Dendritic cell treated with granulocyte-macrophage colony-stimulating factor and Interleukin-4, amounts not matched to agents 40 ng/mL and 50 ng/mL, for 4 days (primary cell): ENCODE measurements at regions of chr13 and their contacts with region 1.

Region 1: GRCh38 chr13:39612023-39612637 is 9.1 kb upstream of the LHFPL6 start:
- H3K4me3 Mint-ChIP-seq: no peak overlapping the region
- H3K27ac Mint-ChIP-seq: no peak overlapping the region
- H3K4me1 Mint-ChIP-seq: no peaks in the 10 kb centered on the region
- H3K27me3 Mint-ChIP-seq: peaks cover 3% of the 10 kb centered on the region

Region 2: GRCh38 chr13:39051157-39051556 is 561.0 kb before region 1 on chr13:
- intact Hi-C with region 1: loop called (anchors 5 kb)
- H3K4me3 Mint-ChIP-seq: no peak overlapping the region
- H3K27ac Mint-ChIP-seq: no peak overlapping the region
- H3K4me1 Mint-ChIP-seq: peaks cover 12% of the 10 kb centered on the region
- H3K27me3 Mint-ChIP-seq: no peaks in the 10 kb centered on the region

Region 3: GRCh38 chr13:39144941-39145533 is 467.1 kb before region 1 on chr13:
- intact Hi-C with region 1: loop called (anchors 2 kb)
- H3K4me3 Mint-ChIP-seq: no peak overlapping the region
- H3K27ac Mint-ChIP-seq: no peak overlapping the region
- H3K4me1 Mint-ChIP-seq: no peaks in the 10 kb centered on the region
- H3K27me3 Mint-ChIP-seq: no peaks in the 10 kb centered on the region

Region 4: DNA sequence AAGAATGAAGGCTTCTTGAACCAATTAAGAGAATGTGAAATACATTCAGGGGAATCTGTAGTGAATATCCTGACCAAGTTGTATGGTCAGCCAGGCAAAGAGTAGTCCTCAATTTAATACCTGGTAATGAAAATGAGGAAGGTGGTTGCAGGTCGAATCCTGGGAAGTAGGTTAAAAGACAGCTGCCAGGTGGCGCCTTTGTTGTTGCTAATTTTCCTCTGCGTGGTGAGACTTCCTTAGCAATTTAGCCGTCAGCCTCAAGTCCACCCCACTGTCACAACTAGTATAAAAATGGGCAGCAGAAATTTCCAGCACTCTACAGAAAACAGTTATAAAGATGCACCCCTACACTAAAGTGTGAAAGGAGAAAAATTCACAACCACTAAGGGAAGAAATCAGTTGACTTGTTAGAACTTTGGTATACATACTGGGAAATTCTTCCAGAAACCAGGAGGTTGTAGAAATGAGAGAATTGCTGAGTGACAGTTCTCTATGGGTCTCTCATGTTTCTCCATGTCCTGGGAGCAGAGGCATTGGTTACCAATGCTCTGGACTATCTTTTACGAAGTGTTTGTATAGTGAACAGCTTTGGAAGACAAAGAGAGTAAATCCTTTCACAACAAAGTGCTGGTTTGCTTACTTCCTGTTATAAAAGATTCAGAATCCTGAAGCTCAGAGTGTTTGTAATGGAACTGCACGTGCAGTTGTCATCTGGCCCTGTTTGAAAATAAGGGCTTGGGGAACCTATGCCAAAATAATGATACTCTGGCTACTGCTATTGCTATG is 338.0 kb before region 1 on chr13:
- intact Hi-C with region 1: loop called (anchors 2 kb)
- H3K4me3 Mint-ChIP-seq: no peak overlapping the region
- H3K27ac Mint-ChIP-seq: no peak overlapping the region
- H3K4me1 Mint-ChIP-seq: no peaks in the 10 kb centered on the region
- H3K27me3 Mint-ChIP-seq: no peaks in the 10 kb centered on the region

Region 5: GRCh38 chr13:39410096-39410901 is 201.8 kb before region 1 on chr13:
- intact Hi-C with region 1: loop called (anchors 5 kb)
- H3K4me3 Mint-ChIP-seq: no peak overlapping the region
- H3K27ac Mint-ChIP-seq: no peak overlapping the region
- H3K4me1 Mint-ChIP-seq: peaks cover 44% of the 10 kb centered on the region
- H3K27me3 Mint-ChIP-seq: no peaks in the 10 kb centered on the region

Region 6: GRCh38 chr13:39646122-39646521 is 34.0 kb after region 1 on chr13:
- intact Hi-C with region 1: no loop called
- H3K4me3 Mint-ChIP-seq: no peak overlapping the region
- H3K27ac Mint-ChIP-seq: no peak overlapping the region
- H3K4me1 Mint-ChIP-seq: no peaks in the 10 kb centered on the region
- H3K27me3 Mint-ChIP-seq: peaks cover 2% of the 10 kb centered on the region